ENCODE measurements at regions of chr2 and their contacts with region 1.

Region 1: GRCh38 chr2:237413777-237414661 is at the start of gene COL6A3:
- DNase-seq: no peak
- ATAC-seq: no peak
- H3K4me3 ChIP-seq: no peak within 1 kb of the TSS
- H3K27ac ChIP-seq: 0 out of 6 replicates have a peak within 1 kb of the TSS, but pooled peaks of 1 of the 2 experiments have one; percentile 11
- H3K4me1 ChIP-seq: 0 out of 3 replicates have a peak, but pooled peaks cover 5% of the 10 kb centered on the region
- CTCF ChIP-seq: no peak
- EP300 ChIP-seq: no peak
- POLR2A ChIP-seq: no peak
- RAD21 ChIP-seq: no peak
- polyA plus RNA-seq, gene COL6A3: 0.20 and 0.28 TPM in 2 replicates

Region 2: DNA sequence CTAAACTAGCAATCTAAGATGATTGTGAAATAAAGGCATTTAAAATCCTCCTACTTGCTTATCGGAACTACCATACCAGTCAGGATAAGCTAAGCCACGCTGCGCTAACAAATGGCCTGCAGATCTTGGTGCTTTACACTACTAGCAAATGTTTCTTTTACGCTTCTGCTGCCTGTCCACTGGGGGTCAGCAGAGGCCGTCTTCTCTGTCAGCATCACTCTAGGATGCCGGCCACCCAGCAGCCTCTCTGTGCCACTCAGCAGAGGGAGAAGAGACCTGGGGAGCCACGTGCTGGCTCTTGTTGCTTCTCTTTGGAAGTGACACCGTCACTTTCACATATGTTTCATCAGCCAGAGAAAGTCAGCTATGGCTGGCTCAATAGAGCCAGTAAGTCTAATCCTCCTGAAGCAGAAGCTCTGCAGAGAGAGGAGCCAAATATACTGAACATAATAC is 291.8 kb before region 1 on chr2:
- CTCF ChIA-PET with region 1: interaction called, 29 read pairs
- POLR2A ChIA-PET with region 1: no interaction called
- DNase-seq: peak; percentile 35 to 80
- ATAC-seq: peak; percentile 92 to 97
- H3K4me3 ChIP-seq: no peak overlapping the region
- H3K27ac ChIP-seq: peak overlapping the region; percentile 44 to 73; a peak in 4 of 6 replicates
- H3K4me1 ChIP-seq: peaks cover 6% of the 10 kb centered on the region
- CTCF ChIP-seq: peak; percentile 86
- EP300 ChIP-seq: no peak
- POLR2A ChIP-seq: no peak
- RAD21 ChIP-seq: peak; percentile 91 to 92

Region 3: GRCh38 chr2:237154082-237154638 is 259.9 kb before region 1 on chr2:
- CTCF ChIA-PET with region 1: interaction called, 22 read pairs
- POLR2A ChIA-PET with region 1: no interaction called
- DNase-seq: peak; percentile 45 to 75
- ATAC-seq: peak; percentile 55 to 83; a peak in 3 of 6 replicates
- H3K4me3 ChIP-seq: no peak overlapping the region
- H3K27ac ChIP-seq: no peak overlapping the region
- H3K4me1 ChIP-seq: no peaks in the 10 kb centered on the region
- CTCF ChIP-seq: peak; percentile 74
- EP300 ChIP-seq: no peak
- POLR2A ChIP-seq: no peak
- RAD21 ChIP-seq: peak; percentile 90 to 98

Region 4: DNA sequence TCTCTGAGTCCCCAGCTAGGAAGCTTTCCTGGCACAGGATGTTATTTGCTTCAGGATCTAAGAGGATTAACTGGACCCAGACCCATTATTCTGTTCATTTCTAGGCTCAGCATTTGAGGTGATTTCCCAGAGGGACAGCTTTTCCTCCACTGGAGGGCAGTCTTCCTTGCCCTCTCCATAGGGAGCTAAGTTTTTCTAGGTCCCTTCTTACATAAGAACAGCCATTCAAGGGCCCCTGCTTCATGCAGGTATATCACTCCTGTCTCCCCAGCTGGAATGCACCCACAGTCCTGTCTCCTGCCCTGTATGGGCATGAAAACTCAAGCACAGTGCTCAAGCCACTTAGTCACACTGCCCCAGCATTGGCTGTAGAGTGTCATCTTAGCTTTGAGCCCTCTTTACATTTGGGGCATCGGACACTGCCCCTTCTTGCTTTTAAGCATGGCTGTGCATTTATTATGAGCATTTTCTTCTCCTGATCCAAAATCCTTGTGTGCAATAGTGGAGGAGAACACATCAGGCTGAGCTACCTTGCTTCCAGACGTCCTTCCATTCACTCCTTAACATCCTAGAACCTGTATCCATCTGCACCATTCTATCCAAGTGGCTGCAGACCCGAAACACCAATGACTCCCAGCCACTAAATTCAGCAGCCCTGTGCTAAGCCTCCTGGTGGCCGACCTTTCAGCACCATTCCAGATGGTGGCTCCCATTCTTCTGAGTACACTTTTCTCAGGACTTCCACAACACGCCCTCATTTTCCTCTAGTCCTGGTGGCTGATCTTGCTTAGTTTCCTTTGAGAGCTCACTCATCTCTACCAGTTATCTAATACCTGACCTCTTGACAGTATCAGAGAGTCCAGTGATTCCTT is 248.4 kb before region 1 on chr2:
- CTCF ChIA-PET with region 1: interaction called, 32 read pairs
- POLR2A ChIA-PET with region 1: no interaction called
- DNase-seq: peak in 1 of 2 experiments; percentile 35
- ATAC-seq: peak; percentile 68 to 80; a peak in 5 of 6 replicates
- H3K4me3 ChIP-seq: no peak overlapping the region
- H3K27ac ChIP-seq: no peak overlapping the region; a peak in 1 of 6 replicates
- H3K4me1 ChIP-seq: no peaks in the 10 kb centered on the region
- CTCF ChIP-seq: peak; percentile 52
- EP300 ChIP-seq: no peak
- POLR2A ChIP-seq: no peak
- RAD21 ChIP-seq: peak; percentile 38 to 63; a peak in 4 of 5 replicates

Region 5: DNA sequence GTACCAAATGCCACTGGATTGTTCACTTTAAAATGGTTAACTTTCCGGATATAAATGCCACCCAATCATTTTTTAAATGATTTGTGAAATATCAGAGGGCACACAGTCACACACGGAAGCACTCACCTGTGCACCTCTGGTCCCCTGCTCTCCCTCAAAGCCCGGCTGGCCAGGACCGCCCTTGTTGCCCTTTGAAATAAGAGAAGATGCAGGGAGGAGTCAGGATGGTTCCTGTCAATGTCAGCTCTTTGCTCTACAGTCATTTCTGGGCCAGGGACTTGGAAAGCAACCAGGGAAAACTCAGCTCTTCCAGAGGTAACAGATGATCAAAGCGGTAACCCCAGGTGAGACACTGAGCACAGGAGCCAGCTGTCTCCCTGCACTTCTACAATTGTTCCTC is 60.8 kb before region 1 on chr2:
- CTCF ChIA-PET with region 1: no interaction called
- POLR2A ChIA-PET with region 1: no interaction called
- DNase-seq: no peak
- ATAC-seq: no peak
- H3K4me3 ChIP-seq: no peak overlapping the region
- H3K27ac ChIP-seq: no peak overlapping the region
- H3K4me1 ChIP-seq: no peaks in the 10 kb centered on the region
- CTCF ChIP-seq: no peak
- EP300 ChIP-seq: no peak
- POLR2A ChIP-seq: no peak
- RAD21 ChIP-seq: no peak

Region 6: GRCh38 chr2:237400199-237400598 is 13.8 kb before region 1 on chr2:
- CTCF ChIA-PET with region 1: interaction called, 97 read pairs
- POLR2A ChIA-PET with region 1: no interaction called
- DNase-seq: no peak
- ATAC-seq: no peak
- H3K4me3 ChIP-seq: no peak overlapping the region
- H3K27ac ChIP-seq: no peak overlapping the region
- H3K4me1 ChIP-seq: no peaks in the 10 kb centered on the region
- CTCF ChIP-seq: no peak
- EP300 ChIP-seq: no peak
- POLR2A ChIP-seq: no peak
- RAD21 ChIP-seq: no peak

Region 7: DNA sequence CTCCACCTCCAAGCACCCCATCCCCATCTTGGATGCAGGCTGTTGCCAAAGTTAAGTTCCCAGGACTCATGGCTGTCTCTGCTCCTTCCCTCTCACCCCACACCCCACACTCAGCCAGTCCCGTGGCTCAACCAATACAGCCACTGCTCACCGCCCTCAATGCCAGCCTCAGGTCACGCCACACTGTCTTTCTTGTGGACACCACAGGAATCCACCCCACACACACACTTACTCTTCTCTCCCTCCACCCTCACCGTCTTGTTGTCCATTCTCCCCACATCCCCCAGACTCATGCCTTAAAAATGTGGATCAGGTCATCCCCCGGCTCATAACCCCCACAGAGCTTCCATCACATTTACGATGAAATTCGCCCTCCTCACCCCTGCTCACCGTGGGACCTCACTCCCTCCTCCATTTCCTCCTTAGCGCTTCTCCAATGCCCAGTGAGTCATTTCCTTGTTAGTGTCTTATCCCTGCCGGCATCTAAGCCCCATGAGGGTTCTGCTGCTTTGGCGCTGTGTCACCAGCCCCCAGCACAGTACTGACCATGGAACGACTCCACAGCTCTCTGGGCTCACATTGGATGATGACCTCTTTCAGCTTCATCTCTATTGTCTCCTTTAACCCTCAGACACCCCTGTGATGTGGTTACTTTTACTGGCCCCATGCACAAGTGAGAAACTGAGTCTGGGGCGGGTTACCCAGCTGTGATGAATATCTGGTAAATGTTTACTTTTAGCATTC is 86.8 kb after region 1 on chr2:
- CTCF ChIA-PET with region 1: no interaction called
- POLR2A ChIA-PET with region 1: no interaction called
- DNase-seq: peak; percentile 96 to 99
- ATAC-seq: peak; percentile 85 to 86
- H3K4me3 ChIP-seq: peak overlapping the region; percentile 21; the same call in 1 of the 3 replicates
- H3K27ac ChIP-seq: peak overlapping the region; percentile 97 to 98
- H3K4me1 ChIP-seq: peaks cover 94% of the 10 kb centered on the region
- CTCF ChIP-seq: no peak
- EP300 ChIP-seq: peak; percentile 99 to 100
- POLR2A ChIP-seq: no peak
- RAD21 ChIP-seq: peak; percentile 16 to 52; a peak in 3 of 5 replicates